Posterior vena cava (tissue), 2 donors: ENCODE measurements at regions of chr2 and their contacts with region 1.

Region 1: GRCh38 chr2:157876066-157876787 is at the start of gene ACVR1:
- DNase-seq: peak; percentile 99
- total RNA-seq, gene ACVR1: 67.4 to 70.3 TPM

Region 2: GRCh38 chr2:157777427-157777826 is 98.8 kb before region 1 on chr2:
- intact Hi-C with region 1: loop called (anchors 5 to 10 kb)
- DNase-seq: no peak

Region 3: DNA sequence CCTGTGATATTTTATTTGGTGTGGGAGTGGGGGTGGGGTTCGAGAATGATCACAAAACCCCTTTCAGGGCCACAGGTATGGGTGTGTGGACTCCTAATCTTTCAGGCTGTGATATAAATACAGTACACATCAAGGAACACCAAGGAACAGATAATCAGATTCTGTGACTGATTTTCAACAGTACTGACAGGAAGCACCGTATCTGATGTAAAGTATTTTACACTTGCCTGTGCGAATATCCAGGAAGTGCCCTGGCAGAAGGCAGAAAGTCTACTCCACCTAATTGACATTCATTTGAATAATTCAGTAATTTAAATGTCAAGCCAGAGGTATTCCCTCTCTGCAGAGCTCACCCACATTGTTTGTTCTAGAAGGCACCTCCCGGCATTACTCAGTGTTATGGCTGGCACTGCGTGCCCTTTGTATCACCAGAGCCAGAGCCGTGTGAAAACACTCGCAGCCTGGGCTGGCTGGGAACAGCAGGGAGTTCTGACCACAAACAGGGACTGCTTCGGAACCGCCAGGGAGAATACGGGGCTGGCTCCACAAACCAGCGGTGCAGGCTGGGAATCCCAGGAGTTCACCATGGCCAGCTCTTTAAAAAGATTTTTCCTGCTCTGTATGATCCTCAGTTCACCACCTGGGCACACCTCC is 91.9 kb before region 1 on chr2:
- intact Hi-C with region 1: loop called (anchors 5 to 10 kb)
- DNase-seq: peak; percentile 81

Region 4: DNA sequence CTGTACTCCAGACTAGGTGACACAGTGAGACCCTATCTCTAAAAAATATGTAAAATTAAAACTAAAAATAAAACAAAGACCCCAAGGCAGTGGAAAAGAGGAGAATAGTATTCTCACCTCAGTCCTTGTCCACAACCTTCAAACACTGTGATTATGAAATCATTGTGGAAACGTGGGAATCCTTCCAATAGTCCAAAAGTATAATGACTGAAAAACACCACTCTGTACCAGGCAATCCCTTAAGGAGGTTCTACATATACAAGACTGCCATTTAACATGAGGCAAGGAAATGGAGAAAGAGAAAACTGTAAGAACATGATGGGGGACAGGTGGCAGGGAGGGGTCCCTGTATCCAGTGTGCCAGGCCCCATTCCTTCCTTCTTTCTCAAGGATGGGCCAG is 66.2 kb before region 1 on chr2:
- intact Hi-C with region 1: loop called in 1 of 2 experiments (anchors 10 kb)
- DNase-seq: no peak

Region 5: GRCh38 chr2:158006961-158007719 is 130.9 kb after region 1 on chr2:
- intact Hi-C with region 1: loop called in 1 of 2 experiments (anchors 10 kb)
- DNase-seq: no peak